ENCODE measurements at regions of chr16 and their contacts with region 1.

Region 1: DNA sequence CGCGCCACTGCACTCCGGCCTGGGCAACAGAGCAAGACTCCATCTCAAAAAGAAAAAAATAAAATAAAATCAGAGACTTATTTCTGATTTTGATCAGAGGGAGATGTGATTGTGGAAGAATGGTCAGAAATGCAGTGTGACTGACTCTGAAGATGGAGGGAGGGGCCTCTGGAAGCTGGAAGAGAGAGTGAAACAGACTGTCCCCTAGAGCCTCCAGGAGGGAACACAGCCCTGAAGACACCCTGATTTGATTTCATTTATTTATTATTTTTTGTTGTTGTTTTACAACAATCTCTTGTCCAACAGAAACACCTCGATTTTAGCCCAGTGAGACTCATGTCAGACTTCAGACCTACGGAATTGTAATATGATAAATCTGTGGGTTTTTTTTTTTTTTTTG is 26.1 kb downstream of the BCL7C start:
- DNase-seq: no peak
- ATAC-seq: no peak
- H3K4me3 ChIP-seq: no peak overlapping the region
- H3K4me3 Mint-ChIP-seq: no peak overlapping the region
- H3K27ac ChIP-seq: no peak overlapping the region
- H3K27ac Mint-ChIP-seq: no peak overlapping the region
- H3K4me1 ChIP-seq: peaks cover 0 to 3% of the 10 kb centered on the region in 2 donors
- H3K4me1 Mint-ChIP-seq: peaks cover 0 to 5% (median 1%) of the 10 kb centered on the region in 7 donors
- H3K27me3 ChIP-seq: no peaks in the 10 kb centered on the region
- H3K27me3 Mint-ChIP-seq: no peaks in the 10 kb centered on the region

Region 2: DNA sequence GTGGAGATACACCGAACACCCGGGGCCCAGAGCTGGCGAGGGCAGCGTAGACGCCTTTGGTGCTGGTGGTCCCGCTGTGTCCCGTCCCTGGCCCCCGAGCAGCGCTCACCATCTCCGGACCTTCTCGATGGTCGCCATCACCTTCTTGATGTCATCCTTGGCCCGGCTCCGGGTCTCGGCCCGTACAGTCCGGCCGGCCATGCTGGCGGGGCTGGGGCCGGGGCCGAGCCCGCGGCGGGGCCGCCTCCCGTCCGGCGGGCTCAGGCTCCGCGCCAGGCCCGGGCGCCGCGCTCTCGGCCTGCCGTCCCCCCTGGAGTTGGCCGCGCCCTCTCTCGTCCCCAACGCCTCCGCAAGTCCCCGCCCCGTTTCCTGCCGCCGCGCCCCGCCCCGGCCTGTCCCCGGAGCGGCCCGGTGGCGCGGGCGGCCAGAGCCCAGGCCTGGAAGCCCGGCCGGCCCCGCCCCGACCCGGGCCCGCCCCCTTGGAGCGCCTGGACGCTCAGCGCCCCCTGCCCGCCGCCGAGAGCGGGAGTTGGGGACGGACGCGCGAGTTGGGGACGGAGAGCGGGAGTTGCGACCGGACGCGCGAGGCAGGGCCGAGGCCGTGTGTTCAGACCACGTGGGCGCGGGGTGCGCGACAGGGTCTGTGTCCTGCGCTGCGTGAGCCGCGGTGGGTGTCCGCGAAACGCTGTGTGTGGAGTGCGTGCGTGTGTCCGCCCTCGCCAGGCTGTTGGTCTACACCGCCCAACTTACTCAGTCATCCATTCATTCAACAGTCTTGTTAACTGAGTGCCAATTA is 26.2 kb after region 1 on chr16 and contains the start of gene BCL7C:
- CTCF ChIA-PET with region 1: interaction called, 3 read pairs
- POLR2A ChIA-PET with region 1: no interaction called
- intact Hi-C with region 1: loop called in 1 of 2 experiments (anchors 5 kb)
- DNase-seq: peak; percentile 48 to 96 (median 61)
- ATAC-seq: peak; percentile 85
- H3K4me3 ChIP-seq: peak within 1 kb of the TSS; percentile 82
- H3K4me3 Mint-ChIP-seq: peak within 1 kb of the TSS; percentile 84 to 96 (median 90)
- H3K27ac ChIP-seq: peak within 1 kb of the TSS; percentile 82
- H3K27ac Mint-ChIP-seq: peak within 1 kb of the TSS; percentile 80 to 94 (median 91)
- H3K4me1 ChIP-seq: peaks cover 25 to 34% of the 10 kb centered on the region in 2 donors
- H3K4me1 Mint-ChIP-seq: peaks cover 26 to 60% (median 48%) of the 10 kb centered on the region in 7 donors
- H3K27me3 ChIP-seq: no peaks in the 10 kb centered on the region
- H3K27me3 Mint-ChIP-seq: no peaks in the 10 kb centered on the region
- total RNA-seq, gene BCL7C: 17.2 to 23.7 (median 22.7) TPM